Adrenal gland (tissue), 19 donors: ENCODE measurements at regions of chr2 and their contacts with region 1.

Region 1: GRCh38 chr2:75113231-75113869 is 86.0 kb downstream of the TACR1 start:
- DNase-seq: no peak
- H3K4me3 ChIP-seq: no peak overlapping the region
- H3K27ac ChIP-seq: no peak overlapping the region
- H3K4me1 ChIP-seq: no peaks in the 10 kb centered on the region
- H3K27me3 ChIP-seq: no peaks in the 10 kb centered on the region
- CTCF ChIP-seq: no peak
- POLR2A ChIP-seq: no peak

Region 2: DNA sequence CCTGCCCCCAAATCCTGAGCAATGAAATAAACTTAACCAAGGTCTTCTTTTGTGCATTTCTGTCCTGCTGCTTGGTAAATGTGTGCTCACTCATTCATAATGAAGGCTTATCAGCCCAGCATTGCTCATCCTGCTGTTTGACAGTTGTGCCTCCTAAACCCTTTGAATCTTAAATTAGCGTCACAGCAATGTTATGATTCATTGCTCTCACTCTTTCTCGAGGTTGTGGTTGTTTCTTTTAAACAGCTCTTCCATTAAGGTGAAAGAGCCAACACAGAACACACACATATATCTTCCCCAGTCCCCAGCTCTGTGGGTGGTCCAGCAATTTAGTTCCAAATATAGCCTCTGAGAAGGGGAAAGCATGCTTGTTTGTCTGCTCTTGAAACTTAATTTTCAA is 363.4 kb after region 1 on chr2:
- intact Hi-C with region 1: loop called in 1 of 2 experiments (anchors 5 kb)
- DNase-seq: no peak
- H3K4me3 ChIP-seq: no peak overlapping the region
- H3K27ac ChIP-seq: no peak overlapping the region
- H3K4me1 ChIP-seq: no peaks in the 10 kb centered on the region
- H3K27me3 ChIP-seq: peaks cover under 1% of the 10 kb centered on the region
- CTCF ChIP-seq: no peak
- POLR2A ChIP-seq: no peak